ENCODE measurements at regions of chr6 and their contacts with region 1.

Region 1: DNA sequence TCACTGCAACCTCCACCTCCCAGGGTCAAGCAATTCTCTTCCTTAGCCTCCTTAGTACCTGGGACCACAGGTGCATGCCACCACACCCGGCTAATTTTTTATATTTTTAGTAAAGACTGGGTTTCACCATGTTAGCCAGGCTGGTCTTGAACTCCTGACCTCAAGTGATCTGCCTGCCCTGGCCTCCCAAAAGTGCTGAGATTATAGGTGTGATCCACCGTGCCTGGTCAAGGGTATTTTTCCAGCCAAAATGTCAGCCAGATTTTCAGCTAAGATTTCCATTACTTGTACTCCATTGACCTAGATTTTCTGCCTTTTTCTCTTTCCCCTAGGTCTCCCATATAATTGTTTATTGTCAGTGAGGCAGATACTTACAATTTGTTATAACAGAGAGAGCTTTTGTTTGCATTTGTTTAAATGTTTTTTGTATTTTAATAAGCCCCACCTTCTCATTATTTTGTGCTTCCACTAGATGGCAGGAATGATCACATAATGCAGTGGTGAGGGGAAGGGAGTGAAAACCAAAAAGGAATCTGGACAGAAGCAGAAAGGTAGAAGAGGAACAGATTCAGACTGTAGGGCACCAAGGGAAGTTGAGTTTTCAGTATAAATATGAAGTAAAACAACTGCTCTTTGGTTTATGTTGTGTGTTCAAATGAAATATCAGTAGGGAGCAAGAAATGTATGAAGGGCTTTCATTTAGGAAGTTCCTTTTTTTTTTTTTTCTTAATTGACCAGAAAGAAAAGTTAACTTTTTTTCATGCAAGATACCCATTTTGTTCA is 29.7 kb downstream of the RPF2 start:
- DNase-seq: no peak
- H3K4me3 ChIP-seq: no peak overlapping the region
- CTCF ChIP-seq: peak; percentile 52

Region 2: GRCh38 chr6:110468731-110469130 is 542.8 kb before region 1 on chr6:
- CTCF ChIA-PET with region 1: no interaction called
- POLR2A ChIA-PET with region 1: no interaction called
- DNase-seq: no peak
- H3K4me3 ChIP-seq: no peak overlapping the region
- CTCF ChIP-seq: no peak

Region 3: DNA sequence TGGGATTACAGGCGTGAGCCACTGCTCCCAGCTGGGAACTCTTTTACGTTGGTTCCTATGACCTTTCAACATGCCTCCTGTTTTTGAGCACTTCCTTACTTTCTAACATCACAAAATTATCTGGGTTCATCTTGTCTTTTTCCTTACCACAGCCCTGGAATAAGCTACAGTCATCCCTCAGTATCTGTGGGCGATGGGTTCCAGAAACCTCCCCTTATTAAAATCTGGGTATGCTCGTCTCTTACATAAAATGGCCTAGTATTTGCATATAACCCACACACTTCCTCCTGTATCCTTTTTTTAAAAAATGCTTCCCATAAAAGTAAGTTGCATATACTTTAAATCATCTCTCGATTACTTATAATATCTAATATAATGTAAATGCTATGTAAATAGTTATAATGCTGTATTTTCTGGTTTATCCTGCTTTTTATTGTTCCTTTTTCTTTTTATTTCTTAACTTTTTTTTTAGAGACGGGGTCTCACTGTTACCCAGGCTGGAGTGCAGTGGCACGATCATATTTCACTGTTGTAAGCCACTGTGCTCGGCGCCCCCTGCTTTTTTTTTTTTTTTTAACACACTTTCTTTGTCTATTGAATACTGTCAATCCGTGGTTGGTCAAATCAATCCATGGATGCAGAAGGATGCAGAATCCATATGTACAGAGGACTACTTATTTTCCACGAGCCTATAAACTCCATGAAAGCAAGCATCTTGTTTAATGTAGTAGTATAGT is 20.5 kb before region 1 on chr6:
- CTCF ChIA-PET with region 1: interaction called, 12 read pairs
- POLR2A ChIA-PET with region 1: no interaction called
- DNase-seq: no peak
- H3K4me3 ChIP-seq: no peak overlapping the region
- CTCF ChIP-seq: no peak

Region 4: GRCh38 chr6:111030008-111031007 is 18.8 kb after region 1 on chr6:
- CTCF ChIA-PET with region 1: interaction called, 25 read pairs
- POLR2A ChIA-PET with region 1: no interaction called
- DNase-seq: no peak
- H3K4me3 ChIP-seq: no peak overlapping the region
- CTCF ChIP-seq: no peak

Region 5: DNA sequence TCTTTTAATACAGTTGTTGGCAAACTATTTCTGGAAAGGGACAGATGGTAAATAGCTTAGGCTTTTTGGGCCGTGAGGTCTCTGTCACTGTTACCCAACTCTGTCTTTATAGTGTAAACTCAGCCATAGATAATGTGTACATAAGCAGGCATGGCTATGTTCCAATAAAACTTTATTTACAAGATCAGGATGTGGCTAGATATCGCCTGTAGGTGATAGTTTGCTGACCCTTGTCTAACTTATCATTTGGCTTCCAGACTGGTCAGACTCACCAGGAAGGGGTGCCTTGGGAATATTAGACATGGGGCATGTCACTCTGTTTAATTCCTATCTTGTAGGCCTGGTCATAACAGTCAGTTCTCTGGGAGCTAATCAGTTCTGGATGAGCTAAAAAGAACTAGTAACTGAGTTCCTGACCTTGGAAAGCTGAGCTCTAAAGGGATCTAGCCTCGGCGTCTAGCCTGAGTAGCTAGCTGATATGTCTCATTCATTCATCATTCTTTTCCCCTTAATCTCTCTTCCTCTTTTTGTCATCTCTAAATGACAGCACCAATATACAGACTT is 239.3 kb after region 1 on chr6:
- CTCF ChIA-PET with region 1: interaction called, 24 read pairs
- POLR2A ChIA-PET with region 1: no interaction called
- DNase-seq: no peak
- H3K4me3 ChIP-seq: no peak overlapping the region
- CTCF ChIP-seq: no peak